Caco-2 (cell line): ENCODE measurements at regions of chr1 and their contacts with region 1.

Region 1: GRCh38 chr1:56444960-56445646 is 134.3 kb downstream of the PLPP3 start:
- DNase-seq: no peak
- H3K4me3 ChIP-seq: no peak overlapping the region
- H3K4me3 Mint-ChIP-seq: no peak overlapping the region
- H3K27ac Mint-ChIP-seq: no peak overlapping the region
- H3K4me1 ChIP-seq: peaks cover 42% of the 10 kb centered on the region
- H3K4me1 Mint-ChIP-seq: peaks cover 11% of the 10 kb centered on the region
- H3K27me3 ChIP-seq: no peaks in the 10 kb centered on the region
- H3K27me3 Mint-ChIP-seq: no peaks in the 10 kb centered on the region
- CTCF ChIP-seq: no peak

Region 2: GRCh38 chr1:56045477-56045876 is 399.6 kb before region 1 on chr1:
- CTCF ChIA-PET with region 1: no interaction called
- POLR2A ChIA-PET with region 1: no interaction called
- intact Hi-C with region 1: no loop called
- DNase-seq: no peak
- H3K4me3 ChIP-seq: no peak overlapping the region
- H3K4me3 Mint-ChIP-seq: no peak overlapping the region
- H3K27ac Mint-ChIP-seq: no peak overlapping the region
- H3K4me1 ChIP-seq: no peaks in the 10 kb centered on the region
- H3K4me1 Mint-ChIP-seq: no peaks in the 10 kb centered on the region
- H3K27me3 ChIP-seq: no peaks in the 10 kb centered on the region
- H3K27me3 Mint-ChIP-seq: no peaks in the 10 kb centered on the region
- CTCF ChIP-seq: no peak

Region 3: GRCh38 chr1:56469640-56470371 is 24.7 kb after region 1 on chr1:
- CTCF ChIA-PET with region 1: interaction called, 11 read pairs
- POLR2A ChIA-PET with region 1: no interaction called
- intact Hi-C with region 1: no loop called
- DNase-seq: no peak
- H3K4me3 ChIP-seq: no peak overlapping the region
- H3K4me3 Mint-ChIP-seq: no peak overlapping the region
- H3K27ac Mint-ChIP-seq: no peak overlapping the region
- H3K4me1 ChIP-seq: no peaks in the 10 kb centered on the region
- H3K4me1 Mint-ChIP-seq: peaks cover 21% of the 10 kb centered on the region
- H3K27me3 ChIP-seq: no peaks in the 10 kb centered on the region
- H3K27me3 Mint-ChIP-seq: no peaks in the 10 kb centered on the region
- CTCF ChIP-seq: no peak

Region 4: GRCh38 chr1:56481140-56481694 is 36.1 kb after region 1 on chr1:
- CTCF ChIA-PET with region 1: no interaction called
- POLR2A ChIA-PET with region 1: no interaction called
- intact Hi-C with region 1: no loop called
- DNase-seq: no peak
- H3K4me3 ChIP-seq: no peak overlapping the region
- H3K4me3 Mint-ChIP-seq: no peak overlapping the region
- H3K27ac Mint-ChIP-seq: no peak overlapping the region
- H3K4me1 ChIP-seq: peaks cover 28% of the 10 kb centered on the region
- H3K4me1 Mint-ChIP-seq: peaks cover 18% of the 10 kb centered on the region
- H3K27me3 ChIP-seq: no peaks in the 10 kb centered on the region
- H3K27me3 Mint-ChIP-seq: no peaks in the 10 kb centered on the region
- CTCF ChIP-seq: no peak